Stomach (tissue), 19 donors: ENCODE measurements at regions of chr15 and their contacts with region 1.

Region 1: DNA sequence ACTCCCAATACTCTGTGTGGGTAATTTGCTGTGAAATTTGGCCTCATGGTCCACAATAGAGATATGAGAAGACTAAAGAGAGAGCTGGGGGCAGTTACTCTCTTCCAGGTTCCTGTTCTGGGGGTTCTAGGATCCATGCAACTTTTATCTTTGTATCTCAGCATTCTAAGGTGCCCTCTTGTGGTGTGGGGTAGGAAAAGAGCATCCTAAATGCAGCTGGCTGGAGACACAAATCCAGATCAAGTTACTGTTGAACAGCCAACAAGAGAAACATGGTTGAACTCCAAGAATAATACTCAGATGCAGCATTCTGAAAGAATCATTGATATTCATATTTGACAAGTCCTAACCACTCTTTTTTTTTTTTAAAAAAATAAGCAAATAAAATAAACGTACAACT is 238.2 kb downstream of the GREM1 start:
- DNase-seq: peak in 1 of 2 donors; percentile 76
- H3K4me3 ChIP-seq: no peak overlapping the region
- H3K27ac ChIP-seq: no peak overlapping the region
- H3K4me1 ChIP-seq: peaks cover 0 to 16% (median 6%) of the 10 kb centered on the region in 4 donors
- H3K27me3 ChIP-seq: no peaks in the 10 kb centered on the region
- CTCF ChIP-seq: peak in 4 of 7 experiments; percentile 7 to 35 (median 21)
- EP300 ChIP-seq: no peak
- POLR2A ChIP-seq: no peak

Region 2: GRCh38 chr15:32669896-32670619 is 285.9 kb before region 1 on chr15:
- intact Hi-C with region 1: loop called (anchors 5 kb)
- DNase-seq: peak in 1 of 2 donors; percentile 53
- H3K4me3 ChIP-seq: no peak overlapping the region
- H3K27ac ChIP-seq: peak overlapping the region in 3 of 5 donors; percentile 51 to 65 (median 55)
- H3K4me1 ChIP-seq: no peaks in the 10 kb centered on the region
- H3K27me3 ChIP-seq: no peaks in the 10 kb centered on the region
- CTCF ChIP-seq: no peak
- EP300 ChIP-seq: no peak
- POLR2A ChIP-seq: no peak

Region 3: GRCh38 chr15:32861761-32862160 is 94.2 kb before region 1 on chr15:
- intact Hi-C with region 1: no loop called
- DNase-seq: peak in 1 of 2 donors; percentile 62
- H3K4me3 ChIP-seq: peak overlapping the region in 3 of 4 donors; percentile 7 to 21 (median 17)
- H3K27ac ChIP-seq: peak overlapping the region in 4 of 5 donors; percentile 17 to 79 (median 73)
- H3K4me1 ChIP-seq: peaks cover 0 to 26% (median 12%) of the 10 kb centered on the region in 4 donors
- H3K27me3 ChIP-seq: no peaks in the 10 kb centered on the region
- CTCF ChIP-seq: no peak
- EP300 ChIP-seq: no peak
- POLR2A ChIP-seq: no peak

Region 4: GRCh38 chr15:33021806-33022389 is 65.9 kb after region 1 on chr15:
- intact Hi-C with region 1: no loop called
- DNase-seq: peak in 1 of 2 donors; percentile 80
- H3K4me3 ChIP-seq: no peak overlapping the region
- H3K27ac ChIP-seq: peak overlapping the region in 3 of 5 donors; percentile 22 to 43 (median 28)
- H3K4me1 ChIP-seq: peaks cover 2 to 24% (median 11%) of the 10 kb centered on the region in 4 donors
- H3K27me3 ChIP-seq: no peaks in the 10 kb centered on the region
- CTCF ChIP-seq: peak in 5 of 7 experiments; percentile 32 to 67 (median 57)
- EP300 ChIP-seq: no peak
- POLR2A ChIP-seq: no peak